ENCODE measurements at regions of chr10 and their contacts with region 1.

Region 1: DNA sequence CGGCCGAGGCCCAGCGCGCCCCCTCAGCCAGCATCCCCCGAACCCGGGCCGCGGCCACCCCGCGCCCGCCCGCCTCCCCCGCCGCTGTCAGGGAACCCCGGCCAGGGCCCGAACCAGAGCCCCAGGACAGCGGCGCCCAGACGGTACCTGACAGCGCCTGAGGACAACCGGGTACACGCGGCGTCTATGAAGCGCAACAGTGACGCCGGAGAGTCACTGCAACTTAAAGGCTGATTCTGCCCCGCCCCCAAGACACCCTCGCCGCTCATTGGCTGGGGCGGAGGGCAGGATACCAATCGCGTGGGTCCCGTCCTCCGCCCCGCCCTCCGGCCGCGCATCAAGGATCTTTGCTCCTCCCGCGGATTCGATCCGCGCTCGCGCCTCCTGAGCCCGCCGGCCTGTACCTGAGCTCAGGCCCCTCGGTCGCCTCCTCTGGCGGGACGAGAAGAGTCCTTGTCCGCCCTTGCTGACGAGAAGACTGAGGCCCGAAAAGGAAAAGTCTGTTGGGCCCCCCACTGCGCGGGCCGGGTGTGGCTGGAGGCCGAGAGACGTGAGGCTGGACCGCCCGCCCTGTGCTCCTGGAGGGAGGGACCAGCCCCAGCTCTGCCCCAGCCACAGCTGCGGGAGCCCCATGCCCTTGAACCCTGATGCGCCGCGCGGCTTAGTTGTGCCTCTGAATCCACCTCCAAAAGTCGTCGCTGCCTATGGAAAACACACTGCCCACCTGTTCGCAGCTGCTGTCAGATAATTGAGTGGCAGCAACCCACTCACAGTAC is at the start of gene OAT:
- DNase-seq: peak; percentile 98
- ATAC-seq: peak; percentile 97
- H3K4me3 ChIP-seq: peak within 1 kb of the TSS; percentile 85 to 88
- H3K27ac ChIP-seq: peak within 1 kb of the TSS; percentile 88 to 95
- H3K4me1 ChIP-seq: peaks cover 0 to 2% of the 10 kb centered on the region in 2 donors
- H3K27me3 ChIP-seq: peaks cover 0 to 2% of the 10 kb centered on the region in 2 donors
- total RNA-seq, gene OAT: 105 to 113 TPM

Region 2: GRCh38 chr10:124461438-124462347 is 42.8 kb after region 1 on chr10 and contains the start of gene LHPP:
- intact Hi-C with region 1: loop called in 1 of 2 experiments (anchors 1 kb)
- DNase-seq: peak; percentile 93 to 95
- ATAC-seq: peak; percentile 96
- H3K4me3 ChIP-seq: peak within 1 kb of the TSS; percentile 81 to 85
- H3K27ac ChIP-seq: peak within 1 kb of the TSS in 1 of 2 donors; percentile 62
- H3K4me1 ChIP-seq: no peaks in the 10 kb centered on the region
- H3K27me3 ChIP-seq: no peaks in the 10 kb centered on the region
- total RNA-seq, gene LHPP: 11.5 to 20.2 TPM

Region 3: DNA sequence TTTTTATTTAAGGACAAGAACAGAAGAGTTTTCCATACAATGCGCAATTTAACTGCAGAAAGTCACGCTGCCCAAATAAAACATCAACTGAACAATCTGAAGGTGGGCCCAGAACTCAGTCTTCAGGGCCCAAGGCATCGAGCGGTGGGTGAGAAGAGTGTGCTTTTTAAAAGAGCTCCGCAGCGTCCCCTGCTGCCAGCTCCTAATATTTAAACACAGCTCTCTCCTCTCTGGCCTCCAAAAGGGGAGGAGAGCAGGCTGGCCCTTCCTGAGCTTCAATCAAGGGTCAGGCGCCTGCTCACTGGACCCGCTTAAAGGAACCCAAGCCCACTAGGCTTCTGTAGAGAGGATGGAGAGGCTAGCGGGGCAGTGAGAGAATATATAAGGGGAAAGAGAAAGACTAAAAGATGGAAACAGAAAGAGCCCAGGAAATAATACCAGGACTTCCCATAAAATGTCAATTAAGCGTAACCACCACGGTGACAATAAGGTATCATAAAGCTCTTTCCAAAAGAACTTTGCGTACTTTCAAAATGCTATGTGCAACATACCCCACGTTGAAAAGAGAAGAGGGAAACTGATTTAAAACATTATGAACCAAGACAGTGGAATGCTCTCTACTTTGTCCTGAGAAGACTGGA is 322.5 kb after region 1 on chr10:
- intact Hi-C with region 1: no loop called
- DNase-seq: peak; percentile 92 to 93
- ATAC-seq: peak; percentile 84
- H3K4me3 ChIP-seq: no peak overlapping the region
- H3K27ac ChIP-seq: no peak overlapping the region
- H3K4me1 ChIP-seq: peaks cover 0 to 2% of the 10 kb centered on the region in 2 donors
- H3K27me3 ChIP-seq: no peaks in the 10 kb centered on the region

Measured in aorta (tissue), 5 donors.